CD14-positive monocyte (primary cell): ENCODE measurements at regions of chr19 and their contacts with region 1.

Region 1: GRCh38 chr19:45558399-45558878 is 26.2 kb downstream of the OPA3 start:
- DNase-seq: peak; percentile 47 to 68 (median 65)
- H3K4me3 ChIP-seq: no peak overlapping the region
- H3K4me3 Mint-ChIP-seq: no peak overlapping the region
- H3K27ac ChIP-seq: no peak overlapping the region
- H3K27ac Mint-ChIP-seq: no peak overlapping the region
- H3K4me1 ChIP-seq: no peaks in the 10 kb centered on the region
- H3K4me1 Mint-ChIP-seq: peaks cover 10% of the 10 kb centered on the region
- H3K27me3 ChIP-seq: no peaks in the 10 kb centered on the region
- H3K27me3 Mint-ChIP-seq: no peaks in the 10 kb centered on the region
- CTCF ChIP-seq: peak; percentile 83

Region 2: DNA sequence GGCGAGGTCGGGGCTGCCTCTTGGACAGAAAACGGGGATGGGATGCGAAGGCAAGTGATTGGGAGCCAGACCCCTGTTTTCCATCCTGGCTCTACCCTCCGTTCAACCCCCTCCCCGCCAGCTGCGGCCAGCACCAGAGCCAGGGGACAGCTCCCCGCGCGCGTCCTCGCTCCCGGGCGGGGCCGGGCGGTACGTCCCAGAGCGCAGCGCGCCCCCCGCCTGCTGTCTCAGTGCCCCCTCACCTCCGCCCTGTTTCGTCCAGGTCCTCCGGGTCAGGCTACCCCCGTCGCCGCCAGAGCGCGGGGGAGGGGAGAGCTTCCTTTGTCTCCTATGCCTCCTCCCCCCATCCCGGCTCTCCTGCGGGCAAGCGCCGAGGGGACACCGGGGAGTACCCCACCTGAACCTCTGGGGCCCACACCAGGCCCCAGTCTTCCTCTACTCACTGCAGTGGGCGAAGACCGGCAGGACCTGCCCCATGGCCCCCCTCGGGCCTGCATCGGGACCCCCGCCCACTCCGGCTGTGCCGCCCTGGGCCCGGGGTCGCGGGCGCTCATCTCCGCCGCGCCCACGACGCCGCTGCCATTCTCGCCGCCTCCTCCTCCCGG is 62.0 kb before region 1 on chr19:
- intact Hi-C with region 1: loop called in 1 of 2 experiments (anchors 5 kb)
- DNase-seq: peak in 1 of 3 donors; percentile 25
- H3K4me3 ChIP-seq: peak overlapping the region; percentile 44 to 79 (median 47)
- H3K4me3 Mint-ChIP-seq: peak overlapping the region; percentile 71 to 76
- H3K27ac ChIP-seq: no peak overlapping the region
- H3K27ac Mint-ChIP-seq: no peak overlapping the region
- H3K4me1 ChIP-seq: peaks cover 56 to 70% of the 10 kb centered on the region in 2 donors
- H3K4me1 Mint-ChIP-seq: peaks cover 53% of the 10 kb centered on the region
- H3K27me3 ChIP-seq: peaks cover 15 to 46% of the 10 kb centered on the region in 2 donors
- H3K27me3 Mint-ChIP-seq: peaks cover 40 to 78% (median 59%) of the 10 kb centered on the region in 3 donors
- CTCF ChIP-seq: no peak

Region 3: DNA sequence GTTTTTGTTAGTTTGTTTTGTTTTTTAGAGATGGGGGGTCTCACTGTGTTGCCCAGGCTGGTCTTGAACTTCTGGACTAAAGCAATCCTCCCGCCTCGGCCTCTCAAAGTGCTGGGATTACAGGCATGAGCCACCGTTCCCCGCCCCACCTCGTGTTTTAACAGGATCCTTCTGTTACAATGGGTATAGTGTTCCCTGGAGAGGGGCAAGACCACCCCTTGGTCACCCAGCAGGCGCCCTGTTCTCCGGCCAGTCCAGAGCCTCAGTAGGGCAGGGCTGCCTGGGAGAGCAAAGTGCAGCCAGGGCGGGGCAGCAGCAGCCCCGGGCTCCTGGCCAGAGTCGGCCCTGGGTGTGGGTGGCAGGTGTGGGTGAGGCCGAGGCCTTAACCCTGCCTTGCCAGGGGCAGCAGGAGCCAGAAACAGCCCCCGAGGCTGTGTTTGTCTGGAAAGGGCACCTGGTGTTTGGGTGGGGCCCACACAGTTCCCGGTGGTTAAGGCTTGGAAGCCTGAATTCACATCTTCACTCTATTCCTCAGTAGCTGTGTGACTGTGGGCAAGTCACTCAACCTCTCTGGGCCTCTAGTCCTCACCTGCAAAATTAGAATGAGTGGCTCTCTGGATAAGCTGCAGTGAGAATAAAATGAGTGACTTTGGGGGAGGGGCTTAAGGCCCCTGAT is 43.9 kb before region 1 on chr19:
- intact Hi-C with region 1: no loop called
- DNase-seq: peak in 1 of 3 donors; percentile 8
- H3K4me3 ChIP-seq: peak overlapping the region in 2 of 3 experiments; percentile 13 to 100
- H3K4me3 Mint-ChIP-seq: peak overlapping the region; percentile 74 to 80
- H3K27ac ChIP-seq: peak overlapping the region; percentile 84 to 96
- H3K27ac Mint-ChIP-seq: peak overlapping the region; percentile 97 to 99 (median 99)
- H3K4me1 ChIP-seq: peaks cover 76 to 83% of the 10 kb centered on the region in 2 donors
- H3K4me1 Mint-ChIP-seq: peaks cover 78% of the 10 kb centered on the region
- H3K27me3 ChIP-seq: no peaks in the 10 kb centered on the region
- H3K27me3 Mint-ChIP-seq: no peaks in the 10 kb centered on the region
- CTCF ChIP-seq: no peak